ENCODE measurements at regions of chr16 and their contacts with region 1.

Region 1: DNA sequence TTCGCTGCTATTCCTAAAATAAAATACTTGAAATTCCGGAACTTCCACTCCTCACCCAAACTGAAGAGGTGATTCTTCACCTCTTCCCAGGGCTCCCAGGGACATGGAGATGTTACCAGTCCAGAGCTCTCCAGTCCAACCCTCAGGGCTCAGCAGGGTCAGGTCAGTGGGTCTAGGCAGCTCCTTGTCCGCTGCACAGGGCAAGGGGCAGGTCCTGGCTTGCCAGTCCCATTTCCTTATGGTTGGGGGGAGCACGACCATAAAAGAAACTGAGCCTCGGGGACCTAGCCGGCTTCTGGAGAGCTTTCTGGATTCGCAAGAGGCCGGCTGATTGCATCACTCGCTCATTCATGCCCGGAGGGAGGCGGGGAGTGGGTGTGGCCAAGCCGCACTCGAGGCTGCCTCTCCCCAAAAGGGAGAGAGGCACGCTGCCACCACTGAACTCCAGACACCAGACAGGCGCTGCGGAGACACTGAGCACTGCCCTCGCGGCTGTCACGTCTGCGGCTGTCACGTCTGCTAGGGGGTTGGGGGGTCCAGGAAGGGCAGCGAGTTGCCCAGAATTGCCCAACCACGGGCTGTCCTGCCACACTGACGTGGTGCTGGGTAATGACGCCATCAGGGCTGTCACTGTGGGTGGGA is 15.8 kb downstream of the SLC7A5 start:
- DNase-seq: peak; percentile 90
- H3K4me3 ChIP-seq: peak overlapping the region; percentile 34 to 48
- H3K27ac ChIP-seq: peak overlapping the region; percentile 85 to 94
- H3K4me1 ChIP-seq: peaks cover 20 to 64% of the 10 kb centered on the region in 2 experiments
- H3K27me3 ChIP-seq: no peaks in the 10 kb centered on the region
- CTCF ChIP-seq: no peak
- EP300 ChIP-seq: peak in 1 of 2 experiments; percentile 59; a peak in 2 of 4 replicates
- RAD21 ChIP-seq: no peak

Region 2: GRCh38 chr16:87661561-87661960 is 192.0 kb before region 1 on chr16:
- CTCF ChIA-PET with region 1: no interaction called
- POLR2A ChIA-PET with region 1: no interaction called
- DNase-seq: no peak
- H3K4me3 ChIP-seq: no peak overlapping the region
- H3K27ac ChIP-seq: no peak overlapping the region
- H3K4me1 ChIP-seq: no peaks in the 10 kb centered on the region
- H3K27me3 ChIP-seq: no peaks in the 10 kb centered on the region; the same call in 1 of the 2 replicates
- CTCF ChIP-seq: no peak
- EP300 ChIP-seq: no peak
- RAD21 ChIP-seq: no peak

Region 3: DNA sequence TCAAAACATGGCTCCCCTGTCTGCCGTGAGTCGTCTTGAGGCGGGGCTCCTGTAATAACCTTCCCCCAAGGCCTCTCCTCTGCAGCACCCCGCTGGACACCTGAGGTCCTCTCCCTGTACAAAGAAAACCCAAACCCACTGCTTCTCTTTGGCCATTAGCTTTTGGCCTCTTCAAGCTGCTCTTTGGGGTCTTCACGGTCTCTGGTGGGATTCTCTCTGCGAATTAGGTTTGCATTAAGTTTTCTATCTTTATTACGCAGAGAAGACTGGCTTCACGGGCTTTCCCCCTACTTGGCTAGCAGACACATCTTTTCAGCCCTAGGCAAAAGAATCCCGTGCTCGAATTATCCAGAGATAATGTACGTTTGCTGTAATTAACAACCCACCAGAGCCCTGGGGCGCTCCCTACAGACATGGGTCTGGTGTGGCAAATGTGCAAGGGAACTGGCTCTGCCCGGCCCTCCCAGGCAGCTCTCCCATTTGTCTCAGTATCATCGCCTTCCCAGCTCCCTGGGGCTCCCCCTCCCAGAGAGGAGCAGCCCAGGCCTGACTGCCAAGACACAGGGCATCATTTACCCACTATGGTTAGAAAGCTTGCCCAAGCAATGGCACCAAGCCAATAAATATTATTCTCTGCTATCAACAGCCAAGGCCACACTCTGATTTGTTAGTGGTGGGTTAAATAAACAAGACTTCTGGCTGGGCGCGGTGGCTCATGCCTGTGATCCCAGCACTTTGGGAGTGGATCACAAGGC is 63.1 kb before region 1 on chr16:
- CTCF ChIA-PET with region 1: interaction called, 15 read pairs
- POLR2A ChIA-PET with region 1: no interaction called
- DNase-seq: peak; percentile 70
- H3K4me3 ChIP-seq: no peak overlapping the region
- H3K27ac ChIP-seq: no peak overlapping the region
- H3K4me1 ChIP-seq: peaks cover 0 to 2% of the 10 kb centered on the region in 2 experiments; a peak in 1 of 4 replicates
- H3K27me3 ChIP-seq: no peaks in the 10 kb centered on the region
- CTCF ChIP-seq: no peak
- EP300 ChIP-seq: no peak
- RAD21 ChIP-seq: no peak

Region 4: DNA sequence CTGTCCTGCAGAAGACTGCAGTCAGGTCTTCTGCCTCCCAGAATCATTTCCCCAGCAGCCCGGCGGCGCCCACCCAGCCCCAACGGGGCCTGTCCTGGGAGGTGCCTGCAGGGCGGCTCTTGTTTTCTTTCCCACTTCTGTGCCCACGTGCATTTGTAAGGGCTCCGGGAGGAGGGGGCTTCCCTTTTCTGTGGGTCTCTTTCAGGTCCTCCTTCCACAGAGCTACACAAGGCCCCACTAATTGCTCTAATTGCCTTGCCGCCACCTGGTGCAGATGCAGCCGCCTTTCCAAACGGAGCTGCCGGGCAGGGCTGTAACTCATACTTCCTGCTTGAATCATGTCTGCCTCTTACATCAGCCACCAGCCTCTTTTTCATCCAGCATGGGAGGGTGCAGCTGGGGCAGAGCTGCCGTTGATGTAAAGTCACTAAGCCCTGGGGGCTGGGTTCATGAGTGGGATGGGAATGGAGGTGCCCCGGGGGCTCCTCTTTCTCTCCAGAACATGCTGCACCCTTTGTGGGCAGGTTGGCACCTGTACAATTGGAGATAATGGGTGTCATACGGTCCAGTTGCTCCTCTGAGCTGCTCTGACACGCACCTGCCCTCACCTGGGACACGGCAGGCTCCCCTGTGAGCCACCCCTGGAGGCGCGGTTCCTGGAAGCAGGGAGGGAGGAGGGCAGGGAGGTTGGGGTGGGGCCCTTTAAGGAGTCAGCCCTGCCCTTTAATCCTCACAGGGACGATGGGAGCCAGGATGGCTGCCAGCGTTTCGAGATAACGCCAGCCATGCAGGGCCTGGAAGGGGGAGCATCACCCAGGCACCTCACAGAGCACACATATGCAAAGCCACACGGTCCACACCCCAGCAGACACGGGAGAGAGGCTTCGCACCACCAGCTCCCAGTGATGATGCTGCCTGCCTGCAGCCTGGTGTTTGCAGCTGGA is 46.7 kb before region 1 on chr16:
- CTCF ChIA-PET with region 1: interaction called, 7 read pairs
- POLR2A ChIA-PET with region 1: interaction called, 12 read pairs
- DNase-seq: peak; percentile 86
- H3K4me3 ChIP-seq: peak overlapping the region; percentile 10 to 21; a peak in 2 of 4 replicates
- H3K27ac ChIP-seq: peak overlapping the region; percentile 49 to 94
- H3K4me1 ChIP-seq: peaks cover 12 to 18% of the 10 kb centered on the region in 2 experiments; a peak in 2 of 4 replicates
- H3K27me3 ChIP-seq: no peaks in the 10 kb centered on the region
- CTCF ChIP-seq: no peak
- EP300 ChIP-seq: peak in 1 of 2 experiments; percentile 60; a peak in 1 of 4 replicates
- RAD21 ChIP-seq: peak; percentile 8; the same call in 1 of the 2 replicates

Region 5: DNA sequence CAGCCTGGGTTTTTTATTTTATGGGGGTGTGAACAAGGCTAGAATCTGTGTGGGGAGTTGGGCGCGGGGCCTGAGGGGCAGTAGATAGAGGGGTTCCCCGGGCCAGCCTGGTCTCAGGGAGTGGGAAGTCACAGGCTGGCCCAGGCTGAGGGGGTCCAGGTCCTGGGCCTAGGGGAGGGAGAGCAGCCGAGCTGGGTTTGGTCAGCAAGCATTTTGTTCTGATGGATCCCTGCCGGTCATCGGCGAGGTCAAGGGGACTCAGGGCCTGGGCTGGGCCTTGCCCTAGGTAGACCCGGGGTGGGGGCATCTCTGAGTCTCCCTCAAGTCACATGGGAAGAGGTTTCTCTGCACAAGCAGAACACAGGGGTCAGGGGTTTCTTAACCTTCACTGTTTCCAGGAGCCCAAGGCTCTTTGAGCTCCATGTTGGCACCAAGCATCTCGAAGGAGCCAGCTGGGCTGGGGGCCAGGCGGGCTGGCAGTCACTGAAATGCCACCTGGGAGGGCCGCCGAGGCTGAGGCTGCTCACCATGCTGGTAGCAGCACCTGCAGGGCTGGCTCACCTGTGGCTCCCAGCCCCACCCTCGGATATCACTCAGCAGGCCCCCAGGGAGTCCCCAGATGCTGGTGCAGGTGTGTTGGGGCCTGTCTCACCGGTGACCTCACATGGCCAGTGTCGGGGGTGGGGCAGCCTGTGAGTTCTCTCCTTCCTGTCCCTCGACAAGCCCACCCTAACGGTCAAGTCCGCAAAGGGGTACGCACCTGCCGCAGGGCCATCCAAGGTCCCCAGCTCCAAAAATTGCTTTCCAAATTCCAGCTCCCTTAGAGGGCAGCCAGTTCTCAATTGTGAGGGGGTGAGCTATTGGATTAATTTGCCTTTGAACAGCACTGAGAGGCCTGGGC is 25.2 kb before region 1 on chr16:
- CTCF ChIA-PET with region 1: interaction called, 16 read pairs
- POLR2A ChIA-PET with region 1: no interaction called
- DNase-seq: no peak
- H3K4me3 ChIP-seq: no peak overlapping the region
- H3K27ac ChIP-seq: no peak overlapping the region
- H3K4me1 ChIP-seq: no peaks in the 10 kb centered on the region
- H3K27me3 ChIP-seq: no peaks in the 10 kb centered on the region
- CTCF ChIP-seq: no peak
- EP300 ChIP-seq: no peak
- RAD21 ChIP-seq: no peak

Region 6: DNA sequence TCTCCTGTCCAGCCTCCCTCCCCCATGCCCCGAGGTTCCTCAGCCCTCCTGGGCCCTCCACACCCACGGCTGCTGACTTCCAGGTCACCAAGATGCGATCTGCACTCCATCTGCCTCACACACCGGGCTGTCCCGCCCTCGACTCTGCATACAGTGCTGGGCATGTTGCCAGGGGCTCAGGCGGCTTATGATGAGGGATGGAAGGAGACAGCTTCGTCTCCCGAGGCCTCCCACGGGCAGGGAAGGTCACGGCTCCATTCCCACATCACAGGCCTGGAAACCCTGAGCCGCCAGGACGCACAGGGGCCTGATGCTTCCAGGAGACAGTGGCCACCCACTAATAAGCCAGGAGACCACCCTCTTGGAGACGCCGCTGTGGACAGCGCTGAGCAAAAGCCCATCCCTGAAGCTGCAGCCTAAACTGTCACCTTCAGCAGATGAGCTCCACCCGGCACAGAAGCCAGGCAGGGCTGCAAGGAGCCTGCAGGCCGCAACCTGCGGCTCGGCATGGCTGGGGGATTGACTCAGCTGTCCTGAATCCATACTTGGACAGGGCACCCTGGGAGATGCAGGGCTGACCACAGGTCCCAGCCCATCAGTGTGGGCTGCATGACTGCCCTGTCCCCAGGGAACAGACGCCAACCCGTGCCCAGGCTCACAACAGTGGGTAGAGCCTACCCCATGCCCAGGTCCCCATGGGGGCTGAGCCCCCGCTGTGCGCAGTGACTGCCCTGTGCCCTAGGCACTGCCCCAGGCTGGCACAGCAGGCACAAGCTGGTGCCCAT is 18.7 kb before region 1 on chr16:
- CTCF ChIA-PET with region 1: interaction called, 108 read pairs
- POLR2A ChIA-PET with region 1: interaction called, 5 read pairs
- DNase-seq: peak; percentile 87
- H3K4me3 ChIP-seq: no peak overlapping the region
- H3K27ac ChIP-seq: peak overlapping the region in 1 of 2 experiments; percentile 71; a peak in 2 of 4 replicates
- H3K4me1 ChIP-seq: peaks cover 7 to 21% of the 10 kb centered on the region in 2 experiments; a peak in 2 of 4 replicates
- H3K27me3 ChIP-seq: no peaks in the 10 kb centered on the region
- CTCF ChIP-seq: no peak
- EP300 ChIP-seq: no peak; a peak in 1 of 4 replicates
- RAD21 ChIP-seq: no peak

Region 7: DNA sequence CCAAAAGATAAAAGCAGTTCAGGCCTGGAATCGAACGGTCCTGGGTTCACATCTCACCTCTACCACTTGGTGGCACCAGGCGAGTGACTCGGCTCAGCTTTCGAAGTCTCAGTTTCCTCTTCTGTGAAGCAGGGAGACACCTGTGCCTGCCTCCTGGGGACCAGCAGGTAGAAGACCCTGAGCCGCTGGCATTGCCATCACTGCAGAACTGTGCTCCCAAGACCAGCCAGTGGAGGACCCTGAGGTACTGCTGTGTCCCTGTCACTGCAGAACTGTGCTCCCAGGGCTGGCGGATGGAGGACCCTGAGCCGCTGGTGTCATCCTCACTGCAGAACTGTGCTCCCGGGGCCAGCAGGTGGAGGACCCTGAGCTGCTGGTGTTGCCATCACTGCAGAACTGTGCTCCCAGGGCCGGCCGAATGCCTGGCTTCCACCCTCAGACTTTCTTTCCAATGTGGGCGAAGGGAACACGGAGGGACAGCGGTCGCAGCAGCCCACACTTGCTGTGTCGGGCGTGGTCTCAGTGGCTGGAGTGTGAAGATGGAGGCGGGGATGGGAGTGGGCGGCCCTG is 24.5 kb after region 1 on chr16:
- CTCF ChIA-PET with region 1: interaction called, 207 read pairs
- POLR2A ChIA-PET with region 1: no interaction called
- DNase-seq: no peak
- H3K4me3 ChIP-seq: no peak overlapping the region
- H3K27ac ChIP-seq: no peak overlapping the region
- H3K4me1 ChIP-seq: no peaks in the 10 kb centered on the region; a peak in 1 of 4 replicates
- H3K27me3 ChIP-seq: no peaks in the 10 kb centered on the region
- CTCF ChIP-seq: peak; percentile 22
- EP300 ChIP-seq: no peak
- RAD21 ChIP-seq: no peak

Region 8: GRCh38 chr16:87914812-87915211 is 61.3 kb after region 1 on chr16:
- CTCF ChIA-PET with region 1: interaction called, 15 read pairs
- POLR2A ChIA-PET with region 1: no interaction called
- DNase-seq: no peak
- H3K4me3 ChIP-seq: no peak overlapping the region
- H3K27ac ChIP-seq: no peak overlapping the region
- H3K4me1 ChIP-seq: peaks cover 0 to 5% of the 10 kb centered on the region in 2 experiments; a peak in 1 of 4 replicates
- H3K27me3 ChIP-seq: no peaks in the 10 kb centered on the region
- CTCF ChIP-seq: no peak
- EP300 ChIP-seq: no peak
- RAD21 ChIP-seq: no peak

Region 9: GRCh38 chr16:87993901-87994300 is 140.4 kb after region 1 on chr16:
- CTCF ChIA-PET with region 1: no interaction called
- POLR2A ChIA-PET with region 1: no interaction called
- DNase-seq: no peak
- H3K4me3 ChIP-seq: no peak overlapping the region
- H3K27ac ChIP-seq: no peak overlapping the region
- H3K4me1 ChIP-seq: no peaks in the 10 kb centered on the region
- H3K27me3 ChIP-seq: no peaks in the 10 kb centered on the region
- CTCF ChIP-seq: no peak
- EP300 ChIP-seq: no peak
- RAD21 ChIP-seq: no peak

Region 10: GRCh38 chr16:88045820-88046303 is 192.3 kb after region 1 on chr16:
- CTCF ChIA-PET with region 1: no interaction called
- POLR2A ChIA-PET with region 1: no interaction called
- DNase-seq: no peak
- H3K4me3 ChIP-seq: no peak overlapping the region
- H3K27ac ChIP-seq: no peak overlapping the region
- H3K4me1 ChIP-seq: peaks cover 0 to 29% of the 10 kb centered on the region in 2 experiments; a peak in 1 of 4 replicates
- H3K27me3 ChIP-seq: no peaks in the 10 kb centered on the region
- CTCF ChIP-seq: no peak
- EP300 ChIP-seq: no peak
- RAD21 ChIP-seq: no peak